Head of caudate nucleus (tissue), 42 donors: ENCODE measurements at regions of chr7 and their contacts with region 1.

Region 1: DNA sequence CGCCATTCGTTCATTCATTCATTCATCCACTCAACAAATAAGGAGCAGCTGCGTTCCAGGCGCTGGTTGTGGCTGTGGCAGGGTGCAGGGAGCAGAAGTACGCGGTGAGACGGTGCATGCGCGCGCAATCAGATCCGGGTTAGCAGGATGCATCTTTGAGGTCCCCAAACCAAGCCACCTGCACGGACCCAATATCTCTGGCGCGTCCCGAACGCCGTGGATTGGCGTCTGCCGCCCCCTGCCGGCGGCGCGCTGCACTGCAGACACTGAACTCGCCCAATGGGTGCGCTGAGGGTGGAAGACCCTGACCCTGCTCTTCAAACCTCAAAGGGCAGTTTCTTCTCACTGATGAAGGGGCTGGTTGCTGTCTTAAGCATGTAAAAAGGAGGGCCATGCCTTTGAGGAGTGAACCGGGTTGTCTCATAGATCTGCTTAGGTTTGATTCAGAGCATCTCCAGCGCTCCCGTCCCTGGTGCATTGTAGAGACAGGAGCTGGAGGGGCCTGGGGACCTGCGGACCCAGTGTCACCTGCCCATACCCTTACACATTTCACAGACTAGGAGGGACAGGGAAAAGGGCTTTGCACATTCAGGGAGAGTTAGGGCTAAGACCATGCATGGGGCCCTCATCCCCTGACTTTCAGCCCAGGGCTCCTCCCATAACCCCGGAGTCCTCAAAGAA is 102.5 kb downstream of the RAMP3 start:
- DNase-seq: peak in 40 of 42 donors; percentile 36 to 89 (median 69)

Region 2: DNA sequence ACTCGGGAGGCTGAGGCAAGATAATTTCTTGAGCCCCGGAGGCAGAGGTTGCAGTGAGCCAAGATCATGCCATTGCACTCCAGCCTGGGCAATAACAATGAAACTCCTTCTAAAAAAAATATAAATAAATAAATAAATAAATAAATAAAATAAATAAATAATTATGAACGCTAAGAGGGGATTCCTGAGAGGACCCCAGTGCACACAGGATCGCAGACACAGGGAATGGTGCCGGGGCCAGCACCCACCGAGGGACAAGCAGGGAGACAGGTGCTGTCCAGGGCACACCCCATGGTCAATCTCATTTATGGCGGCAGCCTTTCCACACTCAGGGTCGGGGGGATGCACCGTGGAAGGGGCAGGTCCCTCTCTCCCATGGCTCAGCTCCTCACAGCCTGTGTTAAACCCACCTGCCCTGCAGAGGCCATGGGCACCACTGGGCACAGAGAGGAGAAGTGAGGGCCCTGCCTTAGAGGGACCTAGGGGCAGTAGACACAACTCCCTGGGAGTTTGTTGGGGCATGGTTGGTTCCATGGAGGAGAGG is 104.7 kb before region 1 on chr7:
- intact Hi-C with region 1: loop called (anchors 2 kb)
- DNase-seq: no peak